Heart left ventricle (tissue), 16 donors: ENCODE measurements at regions of chr14 and their contacts with region 1.

Region 1: GRCh38 chr14:32224737-32225377 is 21.8 kb upstream of the RNU6-8 start:
- DNase-seq: peak in 4 of 5 donors; percentile 31 to 56 (median 40)
- ATAC-seq: peak; percentile 84 to 92 (median 86)
- H3K4me3 ChIP-seq: no peak overlapping the region
- H3K27ac ChIP-seq: peak overlapping the region; percentile 9 to 78 (median 62)
- H3K4me1 ChIP-seq: peaks cover 0 to 32% (median 8%) of the 10 kb centered on the region in 12 donors
- H3K27me3 ChIP-seq: no peaks in the 10 kb centered on the region
- CTCF ChIP-seq: peak in 5 of 12 donors; percentile 17 to 48 (median 41)
- POLR2A ChIP-seq: no peak

Region 2: DNA sequence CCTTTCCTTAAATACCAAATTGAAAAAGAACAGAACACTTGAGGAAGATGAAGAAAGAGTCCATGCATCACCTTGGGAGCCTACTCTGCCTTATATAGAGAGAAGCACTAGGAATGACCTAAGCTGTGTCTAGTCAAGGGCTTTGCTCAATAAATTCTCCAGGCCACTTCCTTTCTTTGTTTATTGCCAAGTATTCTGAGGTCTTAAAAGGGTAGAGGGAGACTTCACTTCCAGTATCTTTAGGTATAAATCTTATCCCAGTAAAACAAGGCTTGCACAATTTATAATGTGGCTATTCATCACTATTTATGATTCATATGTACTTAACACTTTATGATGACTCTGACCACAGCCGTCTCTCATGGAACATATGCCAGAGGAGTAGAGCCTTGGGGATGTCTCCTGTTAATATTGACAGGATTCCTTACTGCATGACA is 232.8 kb before region 1 on chr14:
- intact Hi-C with region 1: loop called in 1 of 10 experiments (anchors 5 kb)
- DNase-seq: no peak
- ATAC-seq: no peak
- H3K4me3 ChIP-seq: no peak overlapping the region
- H3K27ac ChIP-seq: peak overlapping the region in 2 of 12 donors; percentile 33 to 51
- H3K4me1 ChIP-seq: peaks cover 0 to 52% (median 16%) of the 10 kb centered on the region in 12 donors
- H3K27me3 ChIP-seq: no peaks in the 10 kb centered on the region
- CTCF ChIP-seq: no peak
- POLR2A ChIP-seq: no peak

Region 3: GRCh38 chr14:32167907-32168306 is 57.0 kb before region 1 on chr14:
- intact Hi-C with region 1: no loop called
- DNase-seq: no peak
- ATAC-seq: no peak
- H3K4me3 ChIP-seq: no peak overlapping the region
- H3K27ac ChIP-seq: no peak overlapping the region
- H3K4me1 ChIP-seq: peaks cover 0 to 4% (median 0%) of the 10 kb centered on the region in 12 donors
- H3K27me3 ChIP-seq: no peaks in the 10 kb centered on the region
- CTCF ChIP-seq: no peak
- POLR2A ChIP-seq: no peak

Region 4: GRCh38 chr14:32186248-32186647 is 38.6 kb before region 1 on chr14:
- intact Hi-C with region 1: no loop called
- DNase-seq: no peak
- ATAC-seq: no peak
- H3K4me3 ChIP-seq: no peak overlapping the region
- H3K27ac ChIP-seq: no peak overlapping the region
- H3K4me1 ChIP-seq: peaks cover 0 to 6% (median 0%) of the 10 kb centered on the region in 12 donors
- H3K27me3 ChIP-seq: no peaks in the 10 kb centered on the region
- CTCF ChIP-seq: no peak
- POLR2A ChIP-seq: no peak

Region 5: DNA sequence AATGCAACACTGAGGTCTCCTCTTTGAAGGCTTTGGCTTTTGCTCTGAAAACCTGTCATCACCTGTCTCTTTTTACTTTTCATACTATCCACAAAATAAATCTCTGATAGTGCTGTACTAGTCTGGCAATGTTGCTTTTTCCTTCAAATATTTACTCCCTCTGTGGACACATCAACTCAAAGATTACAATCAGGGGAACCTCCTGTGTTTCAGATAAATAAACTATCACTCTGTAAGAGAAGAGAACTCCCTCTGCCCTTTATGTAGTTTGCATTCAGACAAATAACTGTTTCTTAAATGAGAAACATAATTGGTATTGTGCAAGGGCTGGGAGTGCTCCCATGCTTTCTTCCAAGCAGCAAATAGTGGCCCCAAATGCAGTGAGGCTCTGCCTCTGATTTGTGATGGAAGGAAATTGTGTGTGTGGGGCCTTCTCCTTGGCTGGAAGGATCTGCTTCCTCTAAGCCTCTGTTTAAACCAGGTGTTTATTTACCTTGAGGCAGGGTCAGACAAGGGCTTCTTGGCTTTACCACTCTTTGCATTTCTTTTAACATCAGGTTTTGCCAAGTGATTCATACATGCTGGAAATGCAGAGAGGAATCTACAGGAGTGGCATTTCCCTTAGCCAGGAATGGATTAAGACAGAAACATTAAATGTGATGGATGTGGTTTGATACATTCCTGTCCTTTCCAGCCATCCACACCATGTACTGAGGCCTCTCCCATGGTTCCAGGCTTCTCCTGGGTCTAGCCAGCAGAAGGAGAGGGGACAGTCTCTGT is 173.2 kb after region 1 on chr14:
- intact Hi-C with region 1: no loop called
- DNase-seq: no peak
- ATAC-seq: no peak
- H3K4me3 ChIP-seq: no peak overlapping the region
- H3K27ac ChIP-seq: peak overlapping the region in 1 of 12 donors; percentile 23
- H3K4me1 ChIP-seq: peaks cover 0 to 6% (median 0%) of the 10 kb centered on the region in 12 donors
- H3K27me3 ChIP-seq: no peaks in the 10 kb centered on the region
- CTCF ChIP-seq: no peak
- POLR2A ChIP-seq: no peak